ENCODE measurements at regions of chr10 and their contacts with region 1.

Region 1: GRCh38 chr10:22550732-22551131 is 163.6 kb downstream of the PIP4K2A start:
- DNase-seq: peak; percentile 37 to 83 (median 75)
- ATAC-seq: peak; percentile 79
- H3K4me3 ChIP-seq: no peak overlapping the region
- H3K4me3 Mint-ChIP-seq: no peak overlapping the region
- H3K27ac ChIP-seq: no peak overlapping the region
- H3K27ac Mint-ChIP-seq: peak overlapping the region; percentile 67
- H3K4me1 ChIP-seq: no peaks in the 10 kb centered on the region
- H3K4me1 Mint-ChIP-seq: peaks cover 30% of the 10 kb centered on the region
- H3K27me3 ChIP-seq: no peaks in the 10 kb centered on the region
- H3K27me3 Mint-ChIP-seq: no peaks in the 10 kb centered on the region
- CTCF ChIP-seq: peak; percentile 81

Region 2: DNA sequence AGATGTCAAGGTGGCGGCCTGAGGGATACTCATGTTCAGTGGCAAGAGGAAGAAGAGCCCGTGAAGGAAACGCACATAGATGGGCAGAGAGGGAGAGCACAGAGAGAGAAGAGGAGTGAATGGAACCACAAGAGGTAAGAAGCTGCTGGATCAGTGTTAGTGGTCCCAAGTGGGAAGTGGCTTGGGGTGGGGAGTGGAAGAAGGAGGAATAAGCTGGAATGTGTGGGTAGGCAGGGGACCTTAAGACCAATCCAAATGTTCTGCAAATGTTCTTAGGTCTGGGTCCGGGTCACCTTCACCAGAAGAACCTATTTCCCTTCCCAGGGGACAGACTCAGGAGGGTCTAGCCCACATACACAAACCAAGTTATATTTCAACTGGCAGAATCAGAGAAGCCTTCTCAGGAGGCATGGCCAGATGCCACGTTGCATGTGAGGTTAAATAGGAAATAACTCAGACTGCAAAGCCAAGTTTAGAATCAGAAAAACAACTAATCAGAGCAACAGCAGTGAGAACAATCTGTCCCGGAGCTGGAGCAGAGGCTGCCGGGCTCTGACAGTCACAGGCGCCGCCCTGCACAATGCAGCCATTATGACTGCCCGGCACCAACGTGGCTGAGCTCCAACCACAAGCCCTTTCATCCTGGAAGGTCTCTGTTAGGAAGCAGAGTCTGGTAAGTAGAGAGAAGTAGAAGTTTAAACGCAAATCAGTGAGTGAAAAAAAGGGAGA is 298.5 kb after region 1 on chr10:
- CTCF ChIA-PET with region 1: interaction called, 3 read pairs
- POLR2A ChIA-PET with region 1: no interaction called
- intact Hi-C with region 1: loop called in 1 of 2 experiments (anchors 10 kb)
- DNase-seq: peak in 1 of 9 experiments; percentile 21
- ATAC-seq: no peak
- H3K4me3 ChIP-seq: no peak overlapping the region
- H3K4me3 Mint-ChIP-seq: peak overlapping the region; percentile 56
- H3K27ac ChIP-seq: no peak overlapping the region
- H3K27ac Mint-ChIP-seq: peak overlapping the region; percentile 64
- H3K4me1 ChIP-seq: no peaks in the 10 kb centered on the region
- H3K4me1 Mint-ChIP-seq: peaks cover 14% of the 10 kb centered on the region
- H3K27me3 ChIP-seq: peaks cover 0 to 2% of the 10 kb centered on the region in 2 experiments
- H3K27me3 Mint-ChIP-seq: peaks cover 4% of the 10 kb centered on the region
- CTCF ChIP-seq: no peak